Activated CD4-positive, alpha-beta memory T cell treated with anti-CD3 and anti-CD28 coated beads, Interleukin-2, amount 10 ng/mL, durations not matched to agents 7 days and 5 days (primary cell): ENCODE measurements at regions of chr1 and their contacts with region 1.

Region 1: DNA sequence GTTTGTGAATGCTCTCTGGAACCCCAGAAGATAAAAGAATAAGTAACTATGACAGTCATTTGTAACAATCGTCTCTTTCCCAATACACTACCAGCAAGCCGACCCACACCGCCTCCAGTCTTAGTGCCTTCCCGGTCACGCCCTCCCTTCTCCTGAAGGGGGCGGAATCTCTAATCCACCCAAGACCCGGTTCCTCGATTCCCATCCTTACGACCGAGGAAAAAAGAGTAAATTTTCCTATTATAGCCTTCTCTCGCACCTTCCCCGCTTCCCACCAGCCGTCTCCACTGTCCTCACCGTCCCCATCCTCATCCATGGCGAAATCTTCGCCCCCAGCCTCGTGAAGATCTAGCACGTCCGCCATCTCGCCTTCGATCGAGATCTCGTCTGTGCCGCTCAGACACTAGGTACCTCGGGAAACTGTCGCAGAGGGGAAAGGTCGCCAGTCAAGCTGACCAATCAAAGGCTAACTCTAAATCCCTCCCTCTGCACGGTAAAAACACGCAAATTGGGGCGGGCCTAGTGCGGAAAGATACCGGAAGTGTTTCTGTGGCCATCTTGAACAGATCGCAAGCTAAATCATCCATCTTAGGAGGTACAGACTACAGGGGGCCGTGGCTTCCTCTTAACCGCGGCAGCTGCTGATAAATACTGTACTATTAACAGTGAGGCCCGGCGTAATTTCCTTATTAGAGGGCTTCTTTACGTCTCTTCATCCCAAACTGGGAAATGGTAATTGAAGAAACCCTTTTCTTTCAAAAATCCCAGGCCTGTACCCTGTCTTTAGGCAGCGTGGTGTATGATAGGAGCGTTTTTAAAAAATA is at the start of gene RBM8A:
- DNase-seq: peak; percentile 97
- H3K4me3 Mint-ChIP-seq: peak within 1 kb of the TSS; percentile 67
- H3K27ac Mint-ChIP-seq: no peak within 1 kb of the TSS
- H3K4me1 Mint-ChIP-seq: peaks cover 21% of the 10 kb centered on the region
- H3K27me3 Mint-ChIP-seq: no peaks in the 10 kb centered on the region
- total RNA-seq, gene RBM8A: 168 to 174 TPM

Region 2: GRCh38 chr1:145545055-145545454 is 382.2 kb before region 1 on chr1:
- CTCF ChIA-PET with region 1: no interaction called
- POLR2A ChIA-PET with region 1: no interaction called
- DNase-seq: no peak
- H3K4me3 Mint-ChIP-seq: no peak overlapping the region
- H3K27ac Mint-ChIP-seq: no peak overlapping the region
- H3K4me1 Mint-ChIP-seq: no peaks in the 10 kb centered on the region
- H3K27me3 Mint-ChIP-seq: peaks cover 31% of the 10 kb centered on the region

Region 3: DNA sequence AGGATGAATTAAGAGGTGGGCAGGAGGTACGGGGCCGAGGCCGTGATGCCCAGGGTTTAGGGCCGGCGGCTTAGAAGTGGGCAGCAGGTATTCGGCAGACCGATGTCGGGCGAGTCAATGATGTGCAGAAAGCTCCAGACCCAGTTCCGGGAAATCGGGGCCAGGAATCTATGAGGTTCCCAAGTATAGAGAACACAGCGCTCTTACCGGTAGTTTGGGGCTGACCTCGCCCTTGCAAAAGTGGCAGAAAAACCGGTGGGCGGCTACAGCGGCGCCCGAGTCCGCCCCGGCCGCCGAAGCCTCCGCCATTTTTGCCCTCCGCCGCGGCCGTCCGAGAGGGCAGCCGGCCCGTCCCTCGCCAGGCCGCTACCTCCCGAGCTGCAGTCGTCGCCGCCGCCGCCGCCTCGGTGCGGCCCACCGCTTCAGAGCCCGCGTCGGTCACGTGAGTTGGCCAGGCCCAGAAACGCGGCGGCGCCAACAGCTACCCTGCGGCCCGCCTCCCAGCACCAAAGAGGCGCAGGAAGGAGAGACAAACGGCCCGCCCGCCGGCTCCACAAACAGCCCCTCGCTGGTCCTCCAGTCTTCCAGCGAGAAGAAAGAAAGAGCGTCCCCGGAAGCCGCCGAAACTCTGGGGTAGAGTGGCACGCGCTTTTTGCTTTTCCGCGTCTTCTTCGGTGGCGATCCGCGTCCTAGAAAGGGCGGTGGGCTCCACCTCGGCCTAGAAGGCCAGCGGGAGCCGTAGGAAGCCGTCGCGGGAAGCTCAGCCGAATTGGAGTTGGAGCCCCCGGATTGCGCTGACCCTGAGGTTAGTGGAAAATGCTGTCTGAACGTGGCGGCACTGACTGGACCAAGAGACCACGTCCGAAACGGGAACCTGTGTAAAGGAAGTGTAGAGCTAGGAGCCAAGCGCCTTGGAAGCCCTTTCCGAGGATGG is 103.4 kb before region 1 on chr1 and contains the starts of genes POLR3C and RNF115:
- CTCF ChIA-PET with region 1: no interaction called
- POLR2A ChIA-PET with region 1: interaction called, 13 read pairs
- DNase-seq: peak; percentile 91
- H3K4me3 Mint-ChIP-seq: peak within 1 kb of the TSS; percentile 99
- H3K27ac Mint-ChIP-seq: peak within 1 kb of the TSS; percentile 89
- H3K4me1 Mint-ChIP-seq: peaks cover 42% of the 10 kb centered on the region
- H3K27me3 Mint-ChIP-seq: no peaks in the 10 kb centered on the region
- total RNA-seq, gene POLR3C: 29.7 to 32.1 TPM
- total RNA-seq, gene RNF115: 12.9 to 13.1 TPM

Region 4: GRCh38 chr1:145906954-145907753 is 20.1 kb before region 1 on chr1:
- CTCF ChIA-PET with region 1: interaction called, 10 read pairs
- POLR2A ChIA-PET with region 1: interaction called, 17 read pairs
- DNase-seq: no peak
- H3K4me3 Mint-ChIP-seq: no peak overlapping the region
- H3K27ac Mint-ChIP-seq: no peak overlapping the region
- H3K4me1 Mint-ChIP-seq: peaks cover 9% of the 10 kb centered on the region
- H3K27me3 Mint-ChIP-seq: no peaks in the 10 kb centered on the region

Region 5: DNA sequence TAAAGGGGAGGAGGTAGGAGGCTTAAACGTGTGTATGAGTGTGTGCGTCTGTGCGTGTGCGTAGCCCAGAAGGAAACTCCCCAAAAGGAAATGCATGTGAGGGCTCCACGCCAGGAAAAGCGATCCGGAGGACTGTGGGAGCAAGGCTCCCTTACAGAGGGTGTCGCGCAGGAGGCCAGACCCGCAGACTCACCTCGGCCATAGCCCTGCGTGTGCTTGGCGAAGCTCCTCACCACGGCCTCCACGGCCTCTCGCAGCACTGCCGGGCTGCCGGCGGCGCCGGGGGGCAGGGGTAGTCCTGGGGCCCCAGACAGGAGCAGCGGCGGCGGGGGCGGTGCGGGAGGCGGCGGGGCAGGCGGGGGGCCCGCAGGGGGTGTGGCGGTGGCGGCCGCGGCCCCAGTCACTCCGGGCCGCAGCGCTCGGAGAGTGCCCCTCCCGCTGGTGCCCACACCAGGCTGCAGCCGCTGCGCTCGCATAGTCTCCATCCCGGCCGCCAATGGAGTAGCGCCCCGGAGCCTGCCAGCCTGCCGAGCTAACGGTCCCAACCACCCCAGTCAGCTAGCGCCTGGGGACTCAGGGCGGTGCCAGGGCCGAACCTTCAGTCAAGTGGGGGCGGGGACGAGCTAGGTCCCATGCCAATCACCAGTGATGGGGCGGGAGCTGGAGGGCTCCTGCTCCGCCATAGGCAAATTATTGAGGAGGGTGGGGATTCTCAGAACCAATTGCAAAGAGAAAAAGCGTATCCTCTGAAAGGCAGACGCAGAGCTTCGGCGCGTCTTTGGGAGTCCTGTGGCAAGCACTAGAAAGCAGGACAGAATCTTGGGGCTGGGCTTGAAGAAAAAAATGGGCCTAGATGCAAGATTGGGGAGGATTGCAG is 30.4 kb after region 1 on chr1 and contains the start of gene LIX1L:
- CTCF ChIA-PET with region 1: interaction called, 34 read pairs
- POLR2A ChIA-PET with region 1: interaction called, 264 read pairs
- DNase-seq: peak; percentile 96
- H3K4me3 Mint-ChIP-seq: peak within 1 kb of the TSS; percentile 86
- H3K27ac Mint-ChIP-seq: peak within 1 kb of the TSS; percentile 86
- H3K4me1 Mint-ChIP-seq: peaks cover 73% of the 10 kb centered on the region
- H3K27me3 Mint-ChIP-seq: peaks cover 5% of the 10 kb centered on the region
- total RNA-seq, gene LIX1L: 50.3 to 51.0 TPM

Region 6: DNA sequence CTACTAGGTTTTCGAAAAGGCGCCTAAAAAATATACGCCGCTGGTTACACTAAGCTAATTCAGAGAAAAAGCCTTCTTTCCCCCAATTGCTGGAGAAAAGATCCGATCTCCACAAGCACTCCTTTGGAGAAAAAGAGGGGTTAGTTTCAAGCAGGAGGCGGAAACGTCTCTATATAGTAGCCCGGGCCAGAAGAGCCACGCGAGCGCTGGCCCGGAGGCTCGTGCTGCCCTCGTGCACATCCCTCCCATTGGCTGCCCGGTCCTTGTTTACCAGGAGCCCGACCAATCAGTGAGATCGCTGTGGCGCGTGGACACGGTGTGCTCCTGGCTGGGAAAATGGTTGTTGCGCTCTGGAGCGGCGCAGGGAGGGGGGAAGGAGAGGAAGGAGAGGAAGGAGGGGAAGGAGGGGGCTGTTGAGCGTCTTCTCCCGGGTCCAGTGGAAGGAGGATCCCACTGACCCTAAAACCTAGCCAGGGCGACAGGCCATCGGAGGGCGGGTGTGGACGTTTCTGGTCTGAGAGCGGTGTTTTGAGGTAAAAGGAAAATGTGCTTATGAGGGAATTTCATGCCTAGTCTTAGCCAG is 69.2 kb after region 1 on chr1 and contains the start of gene TXNIP:
- CTCF ChIA-PET with region 1: no interaction called
- POLR2A ChIA-PET with region 1: interaction called, 33 read pairs
- DNase-seq: peak; percentile 96
- H3K4me3 Mint-ChIP-seq: peak within 1 kb of the TSS; percentile 93
- H3K27ac Mint-ChIP-seq: peak within 1 kb of the TSS; percentile 97
- H3K4me1 Mint-ChIP-seq: peaks cover 63% of the 10 kb centered on the region
- H3K27me3 Mint-ChIP-seq: no peaks in the 10 kb centered on the region
- total RNA-seq, gene TXNIP: 397 to 407 TPM

Region 7: DNA sequence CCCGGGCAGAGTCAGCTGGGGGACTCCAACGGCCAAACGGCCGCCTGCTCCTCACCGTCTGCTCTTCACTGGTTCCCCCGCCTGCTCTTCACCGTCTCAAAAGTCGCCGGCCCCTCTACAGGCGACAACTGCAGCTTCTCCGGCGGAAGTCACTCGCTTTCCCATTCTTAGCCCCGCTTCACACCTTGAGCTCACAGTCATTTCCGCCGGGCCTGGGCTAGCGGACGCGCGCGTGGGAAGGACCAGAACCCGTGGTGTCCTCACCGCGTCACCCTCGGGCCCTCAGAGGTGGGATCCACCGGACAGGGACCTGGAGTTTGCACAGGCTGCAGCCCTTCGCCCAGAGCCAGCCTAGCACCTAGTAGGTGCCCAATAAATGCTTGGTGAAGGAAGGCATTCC is 122.2 kb after region 1 on chr1:
- CTCF ChIA-PET with region 1: no interaction called
- POLR2A ChIA-PET with region 1: interaction called, 10 read pairs
- DNase-seq: no peak
- H3K4me3 Mint-ChIP-seq: no peak overlapping the region
- H3K27ac Mint-ChIP-seq: no peak overlapping the region
- H3K4me1 Mint-ChIP-seq: peaks cover 32% of the 10 kb centered on the region
- H3K27me3 Mint-ChIP-seq: no peaks in the 10 kb centered on the region